Activated CD4-positive, alpha-beta memory T cell treated with anti-CD3 and anti-CD28 coated beads, Interleukin-2, amount 10 ng/mL, durations not matched to agents 7 days and 5 days (primary cell): ENCODE measurements at regions of chr9 and their contacts with region 1.

Region 1: GRCh38 chr9:68560071-68560844 is 19.6 kb upstream of the TMEM252 start:
- DNase-seq: peak; percentile 58
- H3K4me3 Mint-ChIP-seq: no peak overlapping the region
- H3K27ac Mint-ChIP-seq: no peak overlapping the region
- H3K4me1 Mint-ChIP-seq: peaks cover 15% of the 10 kb centered on the region
- H3K27me3 Mint-ChIP-seq: peaks cover 13% of the 10 kb centered on the region

Region 2: DNA sequence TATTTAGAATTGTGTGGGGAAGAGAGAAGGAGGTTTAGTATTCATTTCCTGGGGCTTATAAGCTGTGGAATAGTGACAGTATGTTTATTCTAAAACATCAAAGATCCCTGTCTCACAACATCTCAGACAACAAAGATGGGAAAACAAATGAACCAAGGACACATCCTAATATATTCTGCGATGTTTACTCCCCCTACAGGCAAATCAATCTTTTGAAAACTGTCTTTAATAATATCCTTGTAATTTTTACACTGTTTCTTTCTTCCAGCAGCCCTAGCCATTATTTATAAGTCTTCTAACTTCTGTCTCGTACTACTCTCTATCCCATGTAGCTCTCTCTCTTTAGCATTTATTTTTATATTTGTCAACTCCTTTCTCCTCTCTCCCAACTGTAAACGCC is 13.9 kb after region 1 on chr9:
- CTCF ChIA-PET with region 1: interaction called, 10 read pairs
- POLR2A ChIA-PET with region 1: no interaction called
- DNase-seq: no peak
- H3K4me3 Mint-ChIP-seq: no peak overlapping the region
- H3K27ac Mint-ChIP-seq: no peak overlapping the region
- H3K4me1 Mint-ChIP-seq: no peaks in the 10 kb centered on the region
- H3K27me3 Mint-ChIP-seq: peaks cover 11% of the 10 kb centered on the region